SK-N-SH (cell line): ENCODE measurements at regions of chr21 and their contacts with region 1.

Region 1: DNA sequence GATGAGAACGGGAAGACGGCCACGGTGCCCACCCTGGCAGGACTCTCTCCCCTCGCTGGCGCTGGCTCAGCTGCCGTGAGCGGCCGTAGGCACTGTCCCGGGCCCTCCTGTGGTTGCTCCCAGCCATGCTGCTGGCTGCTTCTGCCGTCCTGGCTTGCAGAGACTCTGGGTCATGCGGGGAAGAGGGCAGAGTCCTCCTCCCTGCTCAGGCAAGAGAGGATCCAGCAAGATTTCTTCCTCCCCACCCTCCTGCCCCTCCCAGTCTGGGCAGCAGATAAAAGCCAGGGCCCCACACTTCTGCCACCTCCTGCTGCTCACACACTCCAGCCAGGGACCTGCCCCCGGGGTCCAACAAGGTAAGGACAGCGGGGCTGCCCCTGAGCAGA is 60.1 kb downstream of the AGPAT3 start:
- DNase-seq: no peak
- H3K4me3 ChIP-seq: no peak overlapping the region
- H3K27ac ChIP-seq: no peak overlapping the region
- H3K4me1 ChIP-seq: peaks cover 0 to 35% of the 10 kb centered on the region in 2 experiments; a peak in 1 of 4 replicates
- H3K27me3 ChIP-seq: no peaks in the 10 kb centered on the region
- CTCF ChIP-seq: no peak
- EP300 ChIP-seq: no peak
- RAD21 ChIP-seq: no peak

Region 2: GRCh38 chr21:43938751-43939442 is 13.8 kb after region 1 on chr21:
- CTCF ChIA-PET with region 1: interaction called, 14 read pairs
- POLR2A ChIA-PET with region 1: no interaction called
- DNase-seq: peak; percentile 90
- H3K4me3 ChIP-seq: peak overlapping the region in 1 of 2 experiments; percentile 37; a peak in 1 of 4 replicates
- H3K27ac ChIP-seq: no peak overlapping the region
- H3K4me1 ChIP-seq: no peaks in the 10 kb centered on the region; a peak in 1 of 4 replicates
- H3K27me3 ChIP-seq: no peaks in the 10 kb centered on the region
- CTCF ChIP-seq: peak; percentile 81
- EP300 ChIP-seq: no peak
- RAD21 ChIP-seq: peak; percentile 57